ENCODE measurements at regions of chr15 and their contacts with region 1.

Region 1: GRCh38 chr15:46312133-46312740 is 677.4 kb downstream of the SQOR start:
- H3K4me3 Mint-ChIP-seq: no peak overlapping the region
- H3K27ac Mint-ChIP-seq: no peak overlapping the region
- H3K4me1 Mint-ChIP-seq: no peaks in the 10 kb centered on the region
- H3K27me3 Mint-ChIP-seq: no peaks in the 10 kb centered on the region

Region 2: DNA sequence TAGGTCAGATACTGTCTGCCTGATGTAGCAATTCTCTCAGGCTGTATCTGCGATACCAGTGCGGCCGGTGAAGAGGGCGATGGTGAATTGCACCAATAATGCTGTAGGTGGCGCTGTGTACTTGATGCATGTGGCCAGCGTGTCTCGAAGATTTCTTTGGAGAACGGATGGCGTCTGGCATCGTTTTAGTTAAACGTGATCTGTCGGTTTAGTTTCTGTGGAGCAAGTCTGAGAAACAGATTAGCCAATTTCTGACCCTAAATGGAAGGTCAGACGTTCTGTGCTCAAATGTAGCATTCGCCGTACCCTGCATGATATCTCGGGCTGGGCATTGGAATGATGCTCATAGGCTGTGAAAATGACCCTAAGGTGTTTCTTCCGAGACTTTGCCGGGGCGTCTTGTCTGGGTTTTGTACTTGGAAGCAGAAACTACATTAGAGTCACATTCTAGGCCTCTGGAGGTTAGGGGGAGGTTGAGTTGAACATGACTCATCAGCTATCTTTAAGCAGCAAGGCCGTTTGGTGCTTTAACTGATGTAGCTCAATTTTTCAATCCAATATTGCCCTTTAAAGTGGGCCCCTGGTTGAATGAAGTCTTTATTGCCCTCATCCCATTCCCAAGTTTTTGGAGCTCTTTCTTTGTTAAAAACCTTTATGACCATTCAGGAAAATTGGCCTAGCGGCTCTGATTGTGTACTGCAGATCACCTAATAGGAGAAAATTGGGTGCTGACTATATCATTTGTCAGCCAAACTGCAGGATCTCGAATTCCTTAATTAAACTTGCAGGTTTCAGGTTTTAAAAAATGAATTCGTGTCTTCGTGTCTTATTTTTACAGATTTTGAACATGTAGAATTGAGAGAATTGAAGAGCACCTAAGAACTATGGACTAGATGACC is 597.4 kb before region 1 on chr15:
- intact Hi-C with region 1: loop called (anchors 5 kb)
- H3K4me3 Mint-ChIP-seq: no peak overlapping the region
- H3K27ac Mint-ChIP-seq: no peak overlapping the region
- H3K4me1 Mint-ChIP-seq: no peaks in the 10 kb centered on the region
- H3K27me3 Mint-ChIP-seq: peaks cover 13% of the 10 kb centered on the region

Region 3: DNA sequence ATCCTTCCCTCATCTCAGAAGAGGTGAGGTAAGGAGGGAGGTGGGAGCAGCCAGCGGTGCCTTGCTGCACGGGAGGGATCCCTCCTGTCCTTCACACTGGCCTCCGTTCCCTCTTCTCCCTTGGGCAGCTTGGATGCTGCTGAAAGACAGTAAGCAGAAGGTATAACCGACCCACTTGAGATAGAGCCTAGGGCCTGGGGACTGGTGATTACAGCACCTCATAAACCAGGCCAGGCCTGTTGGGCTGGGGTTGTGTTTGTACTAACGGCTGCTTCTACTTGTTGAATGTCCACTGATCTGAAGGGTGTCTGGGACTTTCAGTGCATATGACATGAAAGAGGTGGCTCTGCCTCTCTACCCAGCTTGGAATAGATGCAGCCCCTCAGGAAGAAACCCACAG is 1430.1 kb after region 1 on chr15:
- intact Hi-C with region 1: no loop called
- H3K4me3 Mint-ChIP-seq: no peak overlapping the region
- H3K27ac Mint-ChIP-seq: no peak overlapping the region
- H3K4me1 Mint-ChIP-seq: no peaks in the 10 kb centered on the region
- H3K27me3 Mint-ChIP-seq: no peaks in the 10 kb centered on the region